AG04450 (cell line): ENCODE measurements at regions of chr14 and their contacts with region 1.

Region 1: GRCh38 chr14:34722717-34723545 is 8.5 kb upstream of the CFL2 start:
- DNase-seq: no peak
- H3K4me3 ChIP-seq: no peak overlapping the region
- H3K27ac ChIP-seq: no peak overlapping the region
- H3K27me3 ChIP-seq: no peaks in the 10 kb centered on the region
- CTCF ChIP-seq: peak; percentile 79

Region 2: GRCh38 chr14:34671716-34672115 is 51.2 kb before region 1 on chr14:
- CTCF ChIA-PET with region 1: interaction called, 45 read pairs
- POLR2A ChIA-PET with region 1: no interaction called
- DNase-seq: no peak
- H3K4me3 ChIP-seq: no peak overlapping the region
- H3K27ac ChIP-seq: no peak overlapping the region
- H3K27me3 ChIP-seq: no peaks in the 10 kb centered on the region
- CTCF ChIP-seq: no peak

Region 3: DNA sequence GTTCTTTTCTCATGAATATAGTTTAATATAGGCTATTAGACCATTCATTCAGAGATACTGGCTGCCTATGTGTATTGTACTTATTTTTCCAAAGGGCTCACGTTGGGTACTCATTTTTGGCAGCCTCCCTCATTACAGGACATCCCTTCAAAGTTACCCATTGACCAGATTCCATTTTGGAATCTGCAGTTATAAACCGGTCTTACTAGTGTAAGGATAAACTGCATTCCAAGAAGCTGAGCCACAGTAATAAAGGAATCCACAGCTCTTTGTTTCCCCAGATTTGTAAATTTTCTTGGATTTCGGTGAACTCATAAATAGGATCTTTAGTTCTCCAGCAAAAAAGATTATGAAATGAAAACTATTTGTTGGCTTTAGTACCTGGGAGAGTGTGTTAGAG is 10.3 kb after region 1 on chr14:
- CTCF ChIA-PET with region 1: interaction called, 26 read pairs
- POLR2A ChIA-PET with region 1: no interaction called
- DNase-seq: no peak
- H3K4me3 ChIP-seq: no peak overlapping the region
- H3K27ac ChIP-seq: no peak overlapping the region
- H3K27me3 ChIP-seq: no peaks in the 10 kb centered on the region
- CTCF ChIP-seq: no peak

Region 4: DNA sequence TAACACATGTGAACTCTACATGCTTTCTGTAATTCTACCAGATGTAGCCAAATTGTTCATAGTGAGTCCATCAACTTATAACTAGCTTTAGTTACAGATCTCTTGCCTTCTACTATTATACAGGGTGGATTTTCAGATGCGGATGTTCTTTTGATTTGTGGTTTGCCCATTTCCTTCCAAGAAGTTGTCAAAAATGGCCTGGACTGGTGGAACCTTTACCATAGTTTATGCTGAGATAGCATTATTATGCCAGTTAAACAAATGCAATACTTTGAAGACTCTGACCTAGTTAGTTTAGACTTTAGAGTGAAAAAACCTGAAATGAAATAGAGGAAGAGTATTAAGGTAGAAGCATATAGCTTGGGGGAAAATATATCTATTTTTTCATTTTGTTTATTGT is 18.9 kb after region 1 on chr14:
- CTCF ChIA-PET with region 1: interaction called, 10 read pairs
- POLR2A ChIA-PET with region 1: no interaction called
- DNase-seq: no peak
- H3K4me3 ChIP-seq: no peak overlapping the region
- H3K27ac ChIP-seq: no peak overlapping the region
- H3K27me3 ChIP-seq: no peaks in the 10 kb centered on the region
- CTCF ChIP-seq: no peak

Region 5: GRCh38 chr14:34750670-34751069 is 27.7 kb after region 1 on chr14:
- CTCF ChIA-PET with region 1: interaction called, 17 read pairs
- POLR2A ChIA-PET with region 1: no interaction called
- DNase-seq: peak; percentile 34
- H3K4me3 ChIP-seq: no peak overlapping the region
- H3K27ac ChIP-seq: no peak overlapping the region
- H3K27me3 ChIP-seq: no peaks in the 10 kb centered on the region
- CTCF ChIP-seq: no peak